ENCODE measurements at regions of chr2 and their contacts with region 1.

Region 1: DNA sequence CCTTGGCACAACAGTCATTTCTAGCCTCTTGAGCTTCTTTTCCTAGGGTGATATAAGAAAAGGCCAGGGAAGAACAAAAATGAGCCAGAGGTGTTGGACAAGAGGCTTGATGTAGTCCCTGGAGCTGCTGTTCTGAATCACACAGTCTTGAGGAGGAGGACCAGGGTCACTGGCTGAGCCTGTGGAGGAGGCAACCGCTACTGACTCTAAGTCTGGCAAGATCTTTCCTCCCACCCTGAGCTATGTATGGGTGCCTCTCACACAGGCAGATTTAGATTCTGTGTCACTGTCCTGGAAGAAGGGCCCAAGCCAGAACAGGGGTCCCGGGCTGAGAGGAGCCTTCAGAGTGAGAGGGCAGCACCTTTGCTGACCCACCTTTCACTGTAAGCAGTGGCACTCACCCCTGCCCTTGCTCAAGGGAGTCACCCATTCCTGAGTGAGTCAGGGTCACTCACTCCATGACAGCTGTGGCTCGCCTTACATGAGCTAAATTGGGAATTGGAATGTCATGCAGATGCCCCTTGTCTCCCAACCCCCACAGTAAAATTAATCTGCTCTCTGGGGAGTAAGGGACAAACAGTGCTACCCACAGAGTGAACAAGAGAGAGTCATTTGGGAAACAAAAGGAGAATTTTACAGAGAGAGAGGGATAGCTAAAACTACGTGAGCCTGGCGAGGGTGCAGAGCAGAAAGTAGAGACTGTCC is at the start of gene TRIM54:
- DNase-seq: no peak
- H3K4me3 Mint-ChIP-seq: no peak within 1 kb of the TSS
- H3K27ac Mint-ChIP-seq: peak within 1 kb of the TSS; percentile 47
- H3K4me1 Mint-ChIP-seq: peaks cover 4% of the 10 kb centered on the region
- H3K27me3 Mint-ChIP-seq: peaks cover 54% of the 10 kb centered on the region

Region 2: DNA sequence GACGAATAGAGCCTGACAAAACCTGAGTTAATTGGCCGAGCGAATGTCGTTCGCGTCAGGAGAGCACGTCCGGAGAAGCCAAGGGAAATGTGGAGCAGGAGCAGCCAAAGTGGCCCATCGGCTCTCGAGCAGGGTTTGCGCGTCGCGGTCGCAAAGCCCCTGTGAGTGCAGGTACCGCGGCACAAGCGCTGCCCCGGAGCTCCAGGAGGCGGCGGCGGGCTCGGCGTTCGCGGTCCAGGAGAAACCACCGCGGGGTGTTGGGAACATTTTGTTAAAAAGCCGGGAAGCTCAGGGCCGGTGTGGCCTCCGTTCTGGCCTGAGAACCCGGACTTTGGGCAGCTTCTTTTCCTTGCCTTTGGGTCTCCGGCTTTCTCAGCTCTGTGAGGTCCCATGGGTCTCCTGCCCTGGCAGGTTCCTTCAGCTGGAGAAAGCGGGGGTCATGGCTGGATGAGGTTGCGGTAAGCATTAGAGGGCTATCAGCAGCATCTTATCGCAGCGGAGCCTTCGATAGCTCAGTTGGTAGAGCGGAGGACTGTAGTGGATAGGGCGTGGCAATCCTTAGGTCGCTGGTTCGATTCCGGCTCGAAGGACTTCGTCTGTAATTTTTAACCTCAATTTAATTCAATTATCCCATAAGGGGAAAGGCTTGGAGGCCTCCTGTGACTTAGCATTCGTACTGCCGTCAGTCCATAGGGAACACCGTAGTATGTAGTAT is 231.6 kb before region 1 on chr2:
- CTCF ChIA-PET with region 1: no interaction called
- DNase-seq: peak; percentile 93
- H3K4me3 Mint-ChIP-seq: peak overlapping the region; percentile 92
- H3K27ac Mint-ChIP-seq: peak overlapping the region; percentile 98
- H3K4me1 Mint-ChIP-seq: peaks cover 27% of the 10 kb centered on the region
- H3K27me3 Mint-ChIP-seq: peaks cover 13% of the 10 kb centered on the region

Region 3: GRCh38 chr2:27095745-27096651 is 186.0 kb before region 1 on chr2:
- CTCF ChIA-PET with region 1: interaction called, 28 read pairs
- DNase-seq: peak; percentile 67
- H3K4me3 Mint-ChIP-seq: no peak overlapping the region
- H3K27ac Mint-ChIP-seq: no peak overlapping the region
- H3K4me1 Mint-ChIP-seq: peaks cover 15% of the 10 kb centered on the region
- H3K27me3 Mint-ChIP-seq: no peaks in the 10 kb centered on the region

Region 4: DNA sequence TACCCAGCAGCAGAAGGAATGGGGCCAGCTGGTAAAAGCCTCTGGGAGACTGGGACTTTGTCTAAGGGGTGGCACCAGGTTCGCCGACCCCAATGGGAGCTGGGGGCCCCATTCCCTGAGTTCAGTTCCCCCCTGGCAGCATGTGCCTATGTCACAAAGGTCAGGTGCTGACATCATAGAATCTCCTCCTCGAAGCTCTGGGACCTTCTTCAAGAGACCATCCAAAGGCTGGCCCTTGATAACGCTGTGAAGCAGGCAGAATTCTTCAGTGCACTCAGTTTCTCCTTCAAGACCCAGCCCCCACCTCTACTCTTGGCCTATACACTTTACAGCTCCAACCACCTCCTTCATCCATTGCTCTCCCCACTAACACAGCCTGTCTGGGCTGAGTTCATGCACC is 142.7 kb before region 1 on chr2 and contains the start of gene PRR30:
- CTCF ChIA-PET with region 1: no interaction called
- DNase-seq: no peak
- H3K4me3 Mint-ChIP-seq: no peak within 1 kb of the TSS
- H3K27ac Mint-ChIP-seq: no peak within 1 kb of the TSS
- H3K4me1 Mint-ChIP-seq: peaks cover 9% of the 10 kb centered on the region
- H3K27me3 Mint-ChIP-seq: peaks cover 44% of the 10 kb centered on the region

Region 5: DNA sequence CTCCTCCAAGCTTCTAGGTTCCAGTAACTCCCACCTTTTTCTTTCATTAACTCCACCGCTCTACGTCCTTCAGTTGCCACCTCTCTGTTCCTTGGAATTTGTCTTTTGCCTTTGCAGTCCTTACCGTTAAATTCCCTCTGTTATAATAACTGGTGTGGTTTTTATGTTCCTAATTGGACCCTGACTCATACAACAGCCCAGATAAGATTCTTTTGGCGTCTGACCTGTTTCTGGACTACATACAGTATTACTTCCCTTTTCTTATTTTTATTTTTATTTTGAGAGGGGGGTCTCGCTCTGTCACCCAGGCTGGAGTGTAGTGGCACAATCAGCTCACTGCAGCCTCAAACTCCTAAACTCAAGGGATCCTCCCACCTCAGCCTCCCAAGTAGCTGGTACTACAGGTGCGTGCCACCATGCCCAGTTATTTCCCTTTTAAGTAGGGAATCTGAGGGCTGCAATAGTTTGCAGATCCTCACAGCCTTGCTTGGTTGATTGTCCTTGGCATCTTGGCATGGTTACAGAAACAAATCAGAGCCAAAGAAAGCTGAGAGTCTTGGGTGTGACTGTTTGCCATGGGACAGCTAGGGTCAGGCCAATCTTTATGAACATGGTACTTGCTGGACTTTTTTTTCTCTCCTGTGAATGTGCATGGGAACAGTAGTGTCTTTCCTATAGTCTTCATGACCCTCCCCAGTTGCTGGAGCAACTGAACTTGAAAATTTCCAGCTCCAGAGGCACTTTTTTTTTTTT is 111.2 kb before region 1 on chr2:
- CTCF ChIA-PET with region 1: interaction called, 10 read pairs
- DNase-seq: no peak
- H3K4me3 Mint-ChIP-seq: no peak overlapping the region
- H3K27ac Mint-ChIP-seq: no peak overlapping the region
- H3K4me1 Mint-ChIP-seq: peaks cover 2% of the 10 kb centered on the region
- H3K27me3 Mint-ChIP-seq: peaks cover 35% of the 10 kb centered on the region

Region 6: GRCh38 chr2:27264753-27265535 is 17.1 kb before region 1 on chr2:
- CTCF ChIA-PET with region 1: interaction called, 25 read pairs
- DNase-seq: peak; percentile 64
- H3K4me3 Mint-ChIP-seq: peak overlapping the region; percentile 48
- H3K27ac Mint-ChIP-seq: no peak overlapping the region
- H3K4me1 Mint-ChIP-seq: peaks cover 29% of the 10 kb centered on the region
- H3K27me3 Mint-ChIP-seq: peaks cover 21% of the 10 kb centered on the region

Region 7: DNA sequence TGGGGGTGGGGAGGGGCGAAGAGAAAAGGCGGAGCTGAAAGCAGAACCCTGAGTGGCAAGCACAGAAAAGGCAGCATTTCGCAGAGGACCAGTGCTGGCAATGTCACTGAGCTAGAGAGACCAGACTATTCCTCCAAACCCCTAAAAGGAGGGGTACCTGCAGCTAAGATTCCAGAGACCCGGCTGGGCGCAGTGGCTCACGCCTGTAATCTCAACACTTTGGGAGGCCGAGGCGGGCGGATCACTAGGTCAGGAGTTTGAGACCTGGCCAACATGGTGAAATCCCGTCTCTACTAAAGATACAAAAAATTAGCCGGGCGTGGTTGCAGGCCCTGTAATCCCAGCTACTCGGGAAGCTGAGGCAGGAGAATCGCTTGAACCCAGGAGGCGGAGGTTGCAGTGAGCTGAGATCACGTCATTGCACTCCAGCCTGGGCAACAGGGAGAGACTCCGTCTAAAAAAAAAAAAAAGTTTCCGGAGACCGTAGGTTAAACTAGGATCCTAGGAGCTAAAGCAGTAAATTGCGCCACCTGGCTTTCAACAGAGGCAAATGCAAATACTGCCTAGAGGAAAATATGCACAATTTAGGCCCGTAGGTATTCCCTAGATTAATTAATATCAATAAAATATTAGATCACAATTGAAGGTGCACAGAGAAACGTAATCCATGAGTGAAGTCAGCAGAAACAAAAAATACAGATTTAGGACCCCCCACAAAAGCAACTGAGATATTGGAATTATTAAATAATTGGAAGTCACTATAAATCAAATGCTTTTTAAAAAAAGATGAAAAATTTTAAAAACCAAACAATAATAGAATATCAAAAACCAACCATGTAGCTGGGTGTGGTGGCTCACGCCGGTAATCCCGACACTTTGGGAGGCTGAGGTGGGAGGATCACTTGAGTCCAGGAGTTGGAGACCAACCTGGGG is 21.4 kb after region 1 on chr2:
- CTCF ChIA-PET with region 1: interaction called, 17 read pairs
- DNase-seq: peak; percentile 60
- H3K4me3 Mint-ChIP-seq: peak overlapping the region; percentile 62
- H3K27ac Mint-ChIP-seq: no peak overlapping the region
- H3K4me1 Mint-ChIP-seq: peaks cover 9% of the 10 kb centered on the region
- H3K27me3 Mint-ChIP-seq: peaks cover 55% of the 10 kb centered on the region

Region 8: DNA sequence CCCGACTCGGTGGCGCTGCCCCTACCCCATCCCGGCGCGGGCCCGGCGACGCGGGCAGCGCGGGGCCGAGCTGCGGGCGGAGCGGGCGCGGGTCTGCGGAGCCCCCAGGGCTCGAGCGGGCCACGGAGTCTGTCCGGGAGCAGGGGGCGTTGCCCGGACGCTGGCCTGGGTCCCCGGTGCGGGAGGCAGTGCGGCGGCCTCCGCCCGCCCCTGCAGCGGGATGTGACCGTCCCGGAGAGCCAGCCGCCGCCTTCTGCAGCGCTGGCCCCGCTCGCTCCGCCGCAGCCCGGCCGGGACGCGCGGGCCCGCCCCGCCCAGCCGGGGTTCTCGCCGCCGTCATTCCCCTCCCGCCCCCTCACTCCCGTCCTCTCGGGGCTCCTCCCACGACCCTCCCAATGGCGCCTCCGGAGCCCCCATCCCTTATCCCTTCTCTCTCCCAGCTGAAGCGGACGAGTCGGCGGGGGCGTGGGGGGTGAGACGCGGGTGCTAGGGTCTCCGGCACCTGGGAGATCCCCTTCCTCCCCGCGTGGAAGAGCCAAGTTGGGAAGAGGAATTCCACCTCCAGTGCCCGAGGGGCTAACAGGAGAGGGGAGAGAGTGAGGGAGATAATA is 213.0 kb after region 1 on chr2 and contains the start of gene FNDC4:
- CTCF ChIA-PET with region 1: no interaction called
- DNase-seq: peak; percentile 56
- H3K4me3 Mint-ChIP-seq: peak within 1 kb of the TSS; percentile 51
- H3K27ac Mint-ChIP-seq: no peak within 1 kb of the TSS
- H3K4me1 Mint-ChIP-seq: peaks cover 14% of the 10 kb centered on the region
- H3K27me3 Mint-ChIP-seq: peaks cover 76% of the 10 kb centered on the region

Region 9: DNA sequence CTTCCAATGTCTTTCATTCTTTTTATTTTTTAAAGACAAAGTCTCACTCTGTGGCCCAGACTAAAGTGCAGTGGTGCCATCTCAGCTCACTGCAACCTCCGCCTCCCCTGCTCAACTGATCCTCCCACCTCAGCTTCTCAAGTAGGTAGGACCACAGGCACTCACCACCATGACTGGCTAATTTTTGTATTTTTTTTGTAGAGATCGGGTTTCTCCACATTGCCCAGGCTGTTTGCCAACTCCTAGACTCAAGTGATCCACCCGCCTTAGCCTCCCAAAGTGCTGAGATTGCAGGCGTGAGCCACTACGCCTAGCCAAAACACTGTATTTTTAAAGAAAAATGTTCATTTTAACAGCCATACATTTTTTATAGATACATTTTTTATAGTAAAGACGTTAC is 227.3 kb after region 1 on chr2:
- CTCF ChIA-PET with region 1: no interaction called
- DNase-seq: no peak
- H3K4me3 Mint-ChIP-seq: no peak overlapping the region
- H3K27ac Mint-ChIP-seq: no peak overlapping the region
- H3K4me1 Mint-ChIP-seq: no peaks in the 10 kb centered on the region
- H3K27me3 Mint-ChIP-seq: peaks cover 32% of the 10 kb centered on the region

Measured in activated naive CD4-positive, alpha-beta T cell treated with anti-CD3 and anti-CD28 coated beads, Interleukin-2, amount 10 ng/mL, durations not matched to agents 7 days and 5 days (primary cell).